T-cell (primary cell): ENCODE measurements at regions of chr1 and their contacts with region 1.

Region 1: DNA sequence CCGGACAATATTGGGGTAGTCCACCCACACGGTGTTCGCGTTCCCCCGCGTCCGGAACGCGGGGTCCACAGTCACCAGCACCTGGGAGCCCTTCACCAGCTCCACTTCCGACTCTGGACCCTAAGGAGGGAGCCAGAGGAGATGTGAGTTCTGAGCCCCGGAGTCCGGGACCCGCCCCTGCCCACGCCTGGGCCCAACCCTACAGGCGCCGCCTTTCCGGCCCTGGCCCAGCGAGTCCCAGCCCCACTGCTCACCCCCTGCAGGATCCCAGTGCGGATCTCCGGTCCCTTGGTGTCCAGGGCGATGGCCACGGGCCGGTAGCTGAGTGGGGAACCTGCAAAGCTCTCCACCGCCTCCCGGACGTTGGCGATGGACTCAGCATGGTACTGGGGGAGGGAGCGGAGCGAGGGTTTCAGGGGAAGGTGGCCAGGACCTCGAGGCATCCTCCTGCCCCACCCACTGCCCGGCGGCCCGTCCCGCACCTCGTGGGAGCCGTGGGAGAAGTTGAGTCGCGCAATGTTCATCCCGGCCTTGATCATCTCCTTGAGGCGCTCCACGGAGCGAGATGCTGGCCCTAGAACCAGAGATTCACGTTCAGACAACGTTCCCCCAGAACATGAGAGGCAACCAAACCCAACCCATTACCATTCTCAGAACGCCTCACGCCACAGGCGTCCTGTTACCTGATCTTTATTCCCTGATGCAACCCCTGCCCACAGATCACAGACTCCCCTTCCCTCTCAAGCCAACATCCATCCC is 5.9 kb downstream of the PKLR start:
- DNase-seq: no peak
- ATAC-seq: peak in 1 of 4 experiments; percentile 49
- H3K4me3 ChIP-seq: no peak overlapping the region
- H3K4me3 Mint-ChIP-seq: no peak overlapping the region
- H3K27ac ChIP-seq: no peak overlapping the region
- H3K27ac Mint-ChIP-seq: no peak overlapping the region
- H3K4me1 ChIP-seq: peaks cover 0 to 7% of the 10 kb centered on the region in 2 experiments
- H3K4me1 Mint-ChIP-seq: peaks cover 4 to 6% (median 5%) of the 10 kb centered on the region in 3 donors
- H3K27me3 ChIP-seq: peaks cover 7 to 45% of the 10 kb centered on the region in 2 experiments
- H3K27me3 Mint-ChIP-seq: peaks cover 30 to 39% of the 10 kb centered on the region in 2 donors

Region 2: DNA sequence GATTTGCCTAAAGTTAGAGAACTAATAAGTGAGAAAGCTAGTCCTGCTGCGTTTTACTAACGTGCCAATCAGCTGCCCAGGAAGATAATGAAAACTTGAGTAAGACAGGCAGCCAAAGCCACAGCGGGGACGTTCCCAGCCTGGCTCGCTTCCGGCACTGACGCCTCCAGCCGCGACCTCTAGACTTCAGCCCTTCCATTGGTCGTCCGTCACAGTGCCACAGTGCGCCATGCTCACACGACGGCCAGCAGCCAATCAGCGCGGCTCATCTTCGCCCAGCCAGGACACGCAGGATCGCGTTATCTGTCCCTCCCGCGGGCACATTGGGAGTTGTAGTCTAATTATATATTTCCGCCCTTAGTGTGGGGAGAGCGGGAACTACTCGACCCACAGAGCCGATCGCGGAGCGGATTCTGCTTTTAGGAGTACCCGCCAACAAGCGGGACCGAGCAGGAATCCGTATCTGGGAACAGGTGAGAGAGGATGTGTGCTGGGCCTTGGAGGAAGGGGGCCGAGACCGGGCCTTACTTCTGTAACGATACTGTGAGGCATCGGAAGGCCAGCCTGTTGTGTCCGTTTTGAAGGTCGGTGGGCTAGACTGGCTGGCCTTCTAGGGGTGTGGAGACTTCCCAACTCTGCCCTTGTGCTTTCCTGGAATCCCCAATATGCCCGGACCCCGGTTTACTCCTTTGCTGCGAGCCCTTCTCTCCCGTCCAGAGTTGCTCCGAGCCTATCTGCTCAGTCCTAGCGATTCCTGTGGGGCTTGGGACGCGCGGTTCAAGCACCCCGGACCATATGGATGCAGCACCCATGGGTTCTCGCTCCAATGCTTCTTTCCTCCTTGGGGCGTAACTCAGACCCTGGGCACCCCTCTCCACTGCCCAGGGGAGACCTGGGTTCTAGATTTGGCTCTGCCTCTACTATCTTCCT is 13.4 kb after region 1 on chr1 and contains the start of gene FDPS:
- CTCF ChIA-PET with region 1: interaction called in 1 of 2 experiments, 10 read pairs
- POLR2A ChIA-PET with region 1: no interaction called
- DNase-seq: peak; percentile 87 to 99 (median 97)
- ATAC-seq: peak; percentile 98 to 100 (median 99)
- H3K4me3 ChIP-seq: peak within 1 kb of the TSS; percentile 89
- H3K4me3 Mint-ChIP-seq: peak within 1 kb of the TSS; percentile 90 to 95 (median 92)
- H3K27ac ChIP-seq: peak within 1 kb of the TSS; percentile 98
- H3K27ac Mint-ChIP-seq: peak within 1 kb of the TSS; percentile 92 to 93
- H3K4me1 ChIP-seq: peaks cover 5 to 30% of the 10 kb centered on the region in 2 experiments
- H3K4me1 Mint-ChIP-seq: peaks cover 30 to 32% (median 31%) of the 10 kb centered on the region in 3 donors
- H3K27me3 ChIP-seq: no peaks in the 10 kb centered on the region
- H3K27me3 Mint-ChIP-seq: no peaks in the 10 kb centered on the region
- total RNA-seq, gene FDPS: 66.7 to 100 (median 93.0) TPM